Endothelial cell of umbilical vein (primary cell): ENCODE measurements at regions of chr12 and their contacts with region 1.

Region 1: GRCh38 chr12:64160711-64161060 is 61.4 kb downstream of the KICS2 start:
- DNase-seq: peak; percentile 53
- H3K4me3 ChIP-seq: no peak overlapping the region
- H3K27ac ChIP-seq: peak overlapping the region; percentile 70
- H3K4me1 ChIP-seq: peaks cover 13% of the 10 kb centered on the region
- H3K27me3 ChIP-seq: no peaks in the 10 kb centered on the region
- CTCF ChIP-seq: no peak
- POLR2A ChIP-seq: no peak

Region 2: DNA sequence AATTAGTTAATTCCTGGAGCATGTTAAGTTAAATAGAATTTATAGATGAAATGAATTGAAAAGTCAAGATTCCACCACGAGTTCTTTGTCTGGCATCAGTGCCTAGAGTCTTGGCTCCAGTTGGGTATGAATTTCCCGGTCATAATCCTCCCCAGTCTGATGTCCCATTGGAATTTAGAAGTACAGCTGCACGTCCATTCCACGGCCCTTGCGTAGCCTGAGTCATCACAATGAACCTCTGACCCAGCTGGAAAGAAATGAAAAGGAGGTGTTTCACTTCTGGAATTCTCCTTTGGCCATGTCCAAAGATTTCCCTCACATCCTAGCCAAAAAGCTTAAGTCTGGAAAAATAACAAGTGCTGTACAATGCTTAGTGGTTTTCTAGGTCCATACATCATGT is 61.3 kb before region 1 on chr12:
- CTCF ChIA-PET with region 1: no interaction called
- POLR2A ChIA-PET with region 1: no interaction called
- dilution Hi-C with region 1: no loop called
- intact Hi-C with region 1: loop called (anchors 5 kb)
- DNase-seq: peak; percentile 70
- H3K4me3 ChIP-seq: no peak overlapping the region
- H3K27ac ChIP-seq: no peak overlapping the region
- H3K4me1 ChIP-seq: no peaks in the 10 kb centered on the region
- H3K27me3 ChIP-seq: no peaks in the 10 kb centered on the region
- CTCF ChIP-seq: no peak
- POLR2A ChIP-seq: no peak